PC-3 (cell line): ENCODE measurements at regions of chr7 and their contacts with region 1.

Region 1: GRCh38 chr7:94178230-94178629 is 174.1 kb upstream of the BET1 start:
- DNase-seq: no peak
- ATAC-seq: no peak
- H3K4me3 ChIP-seq: no peak overlapping the region
- H3K27ac ChIP-seq: no peak overlapping the region
- H3K4me1 ChIP-seq: peaks cover 12% of the 10 kb centered on the region
- H3K27me3 ChIP-seq: no peaks in the 10 kb centered on the region
- CTCF ChIP-seq: no peak

Region 2: GRCh38 chr7:94109556-94109955 is 68.7 kb before region 1 on chr7:
- CTCF ChIA-PET with region 1: no interaction called
- POLR2A ChIA-PET with region 1: no interaction called
- intact Hi-C with region 1: loop called (anchors 5 kb)
- DNase-seq: no peak
- ATAC-seq: no peak
- H3K4me3 ChIP-seq: no peak overlapping the region
- H3K27ac ChIP-seq: no peak overlapping the region
- H3K4me1 ChIP-seq: no peaks in the 10 kb centered on the region
- H3K27me3 ChIP-seq: no peaks in the 10 kb centered on the region
- CTCF ChIP-seq: no peak

Region 3: DNA sequence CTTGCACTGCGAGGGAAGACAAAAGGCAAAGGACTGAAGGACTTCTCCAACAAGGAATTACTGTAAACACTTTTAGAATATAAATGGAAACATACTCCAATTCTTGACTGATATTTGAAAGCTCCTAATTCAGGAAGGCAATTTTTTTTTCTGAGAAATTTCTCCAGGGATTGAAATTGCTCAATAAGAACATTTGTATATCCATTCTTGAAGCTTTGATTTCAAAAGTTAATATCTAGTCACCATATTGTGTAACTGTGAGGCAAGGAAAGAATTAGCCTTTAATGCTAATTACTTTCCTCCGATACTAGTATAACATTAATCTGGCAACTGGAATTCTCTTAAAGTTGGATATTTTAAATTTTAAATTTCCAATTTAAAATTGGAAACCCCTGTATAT is 28.1 kb after region 1 on chr7:
- CTCF ChIA-PET with region 1: no interaction called
- POLR2A ChIA-PET with region 1: interaction called, 11 read pairs
- intact Hi-C with region 1: no loop called
- DNase-seq: no peak
- ATAC-seq: no peak
- H3K4me3 ChIP-seq: no peak overlapping the region
- H3K27ac ChIP-seq: no peak overlapping the region
- H3K4me1 ChIP-seq: no peaks in the 10 kb centered on the region
- H3K27me3 ChIP-seq: peaks cover 3% of the 10 kb centered on the region; the same call in 1 of the 2 replicates
- CTCF ChIP-seq: no peak